Activated CD4-positive, alpha-beta T cell treated with anti-CD3 and anti-CD28 coated beads for 36 hours (primary cell): ENCODE measurements at regions of chr12 and their contacts with region 1.

Region 1: DNA sequence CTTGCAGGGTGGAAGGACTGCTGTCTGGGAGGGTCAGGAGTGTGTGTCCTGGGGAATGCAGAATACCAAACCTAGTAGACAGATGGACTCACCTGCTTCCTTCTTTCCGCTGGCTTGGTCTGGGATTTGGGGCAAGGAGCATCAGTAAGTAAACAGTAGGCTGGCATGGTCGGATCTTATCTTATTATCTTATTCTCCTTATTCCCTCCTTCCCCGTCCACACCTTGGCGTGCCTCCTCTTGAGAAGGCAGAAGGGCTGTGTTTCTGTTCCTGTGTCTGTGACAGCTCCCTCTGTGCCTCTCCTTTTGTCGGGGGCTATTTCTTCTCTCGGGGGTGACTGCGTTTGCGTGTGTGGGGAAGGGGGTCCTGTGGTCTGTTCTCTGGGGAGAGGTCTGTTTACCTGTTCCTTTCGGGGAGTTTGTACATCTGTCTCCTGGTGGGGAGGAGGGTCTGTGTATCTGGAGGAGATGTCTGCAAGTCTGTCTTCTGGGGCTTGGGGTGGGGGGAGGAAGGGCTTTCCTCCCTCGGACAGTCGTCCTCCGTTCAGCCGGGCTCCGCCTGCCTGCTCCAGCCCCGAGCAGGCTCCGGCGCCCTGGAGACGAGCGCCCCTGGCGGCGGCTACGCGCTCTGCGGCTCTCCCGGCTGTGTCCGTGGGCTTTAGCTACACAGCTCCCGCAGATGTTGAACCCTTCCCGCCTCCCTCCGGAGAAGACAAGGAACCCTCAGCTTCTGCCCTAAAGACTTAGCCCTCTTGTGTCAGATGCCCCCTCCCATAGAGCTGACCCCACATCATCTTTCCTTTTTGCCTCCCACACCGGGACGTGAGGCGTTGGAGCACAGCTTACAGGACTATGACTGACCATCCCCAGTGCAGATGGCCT is 4.3 kb downstream of the KRT86 start:
- DNase-seq: peak; percentile 85
- ATAC-seq: peak; percentile 99
- H3K4me3 Mint-ChIP-seq: no peak overlapping the region
- H3K27ac Mint-ChIP-seq: no peak overlapping the region
- H3K4me1 Mint-ChIP-seq: peaks cover 3% of the 10 kb centered on the region
- H3K27me3 Mint-ChIP-seq: peaks cover 48% of the 10 kb centered on the region

Region 2: DNA sequence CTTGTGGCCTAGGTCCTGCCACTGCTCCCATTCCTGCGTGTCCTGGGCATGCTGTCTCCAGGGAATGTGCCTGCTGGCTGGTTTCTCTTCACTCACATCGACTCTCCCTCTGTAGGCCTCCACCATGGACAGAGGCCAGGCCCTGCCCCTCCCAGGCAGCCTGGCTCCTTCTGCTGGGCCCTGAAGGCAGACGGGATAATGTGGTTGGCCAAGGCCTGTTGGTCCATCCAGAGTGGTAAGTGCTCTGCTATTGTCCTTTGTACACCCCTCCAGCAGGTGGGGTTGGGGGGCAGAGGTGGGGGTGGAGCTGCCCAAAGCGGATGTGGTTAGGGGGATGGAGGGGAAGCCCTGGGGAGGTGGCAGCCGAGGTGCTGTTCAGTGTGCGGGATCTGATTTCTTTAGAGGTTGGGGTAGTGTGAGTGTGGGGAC is 237.1 kb before region 1 on chr12:
- CTCF ChIA-PET with region 1: no interaction called
- POLR2A ChIA-PET with region 1: no interaction called
- intact Hi-C with region 1: no loop called
- DNase-seq: peak; percentile 62
- ATAC-seq: peak; percentile 55
- H3K4me3 Mint-ChIP-seq: peak overlapping the region; percentile 21
- H3K27ac Mint-ChIP-seq: peak overlapping the region; percentile 58
- H3K4me1 Mint-ChIP-seq: peaks cover 45% of the 10 kb centered on the region
- H3K27me3 Mint-ChIP-seq: no peaks in the 10 kb centered on the region

Region 3: GRCh38 chr12:52139552-52140062 is 139.2 kb before region 1 on chr12:
- CTCF ChIA-PET with region 1: no interaction called
- POLR2A ChIA-PET with region 1: no interaction called
- intact Hi-C with region 1: no loop called
- DNase-seq: peak; percentile 70
- ATAC-seq: peak; percentile 96
- H3K4me3 Mint-ChIP-seq: no peak overlapping the region
- H3K27ac Mint-ChIP-seq: no peak overlapping the region
- H3K4me1 Mint-ChIP-seq: no peaks in the 10 kb centered on the region
- H3K27me3 Mint-ChIP-seq: peaks cover 2% of the 10 kb centered on the region

Region 4: DNA sequence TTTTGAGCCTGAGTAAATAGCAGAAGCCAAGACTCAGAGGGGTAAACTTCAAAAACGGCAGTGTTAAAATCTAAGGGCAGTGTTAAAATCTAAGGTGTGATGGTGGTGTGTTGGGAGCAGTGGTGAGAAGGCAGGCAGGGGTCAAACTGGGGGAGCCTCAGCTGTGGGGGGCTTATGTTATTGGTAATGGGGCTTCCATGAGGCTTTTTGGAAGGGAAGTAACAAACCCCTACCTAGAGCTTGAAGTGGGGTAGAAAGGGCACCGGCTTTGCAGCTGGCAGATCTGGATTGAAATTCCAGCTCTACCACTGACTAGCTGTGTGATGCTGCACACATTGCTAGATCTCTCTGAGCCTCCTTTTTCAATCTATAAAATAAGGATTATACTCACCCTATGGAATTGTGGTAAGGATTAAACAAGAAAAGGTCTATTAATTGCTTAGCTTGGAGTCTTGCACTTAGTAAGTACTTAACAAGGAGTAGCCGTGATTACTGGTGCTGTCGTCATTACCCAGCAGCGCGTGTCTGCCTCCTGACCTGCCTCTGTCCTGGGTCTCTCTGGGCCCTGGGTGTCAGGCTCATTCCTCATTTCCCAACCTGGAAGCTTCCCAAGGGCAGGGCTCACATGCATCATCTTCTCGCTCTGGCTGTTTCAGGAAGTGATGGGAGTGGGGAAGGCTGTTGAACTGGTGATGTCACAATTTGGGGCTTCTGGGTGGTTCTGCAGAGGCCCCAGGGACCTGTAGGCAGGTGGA is 68.4 kb before region 1 on chr12:
- CTCF ChIA-PET with region 1: no interaction called
- POLR2A ChIA-PET with region 1: no interaction called
- intact Hi-C with region 1: no loop called
- DNase-seq: no peak
- ATAC-seq: no peak
- H3K4me3 Mint-ChIP-seq: no peak overlapping the region
- H3K27ac Mint-ChIP-seq: no peak overlapping the region
- H3K4me1 Mint-ChIP-seq: no peaks in the 10 kb centered on the region
- H3K27me3 Mint-ChIP-seq: peaks cover 10% of the 10 kb centered on the region

Region 5: GRCh38 chr12:52221912-52222457 is 56.8 kb before region 1 on chr12:
- CTCF ChIA-PET with region 1: interaction called, 7 read pairs
- POLR2A ChIA-PET with region 1: no interaction called
- intact Hi-C with region 1: loop called in 1 of 2 experiments (anchors 1 kb)
- DNase-seq: peak; percentile 96
- ATAC-seq: peak; percentile 98
- H3K4me3 Mint-ChIP-seq: no peak overlapping the region
- H3K27ac Mint-ChIP-seq: peak overlapping the region; percentile 40
- H3K4me1 Mint-ChIP-seq: peaks cover 20% of the 10 kb centered on the region
- H3K27me3 Mint-ChIP-seq: peaks cover 29% of the 10 kb centered on the region

Region 6: GRCh38 chr12:52268212-52268611 is 10.6 kb before region 1 on chr12:
- CTCF ChIA-PET with region 1: interaction called, 29 read pairs
- POLR2A ChIA-PET with region 1: no interaction called
- intact Hi-C with region 1: no loop called
- DNase-seq: no peak
- ATAC-seq: no peak
- H3K4me3 Mint-ChIP-seq: no peak overlapping the region
- H3K27ac Mint-ChIP-seq: no peak overlapping the region
- H3K4me1 Mint-ChIP-seq: no peaks in the 10 kb centered on the region
- H3K27me3 Mint-ChIP-seq: peaks cover 24% of the 10 kb centered on the region

Region 7: GRCh38 chr12:52307836-52308805 is 29.3 kb after region 1 on chr12:
- CTCF ChIA-PET with region 1: interaction called, 10 read pairs
- POLR2A ChIA-PET with region 1: no interaction called
- intact Hi-C with region 1: no loop called
- DNase-seq: peak; percentile 76
- ATAC-seq: peak; percentile 89
- H3K4me3 Mint-ChIP-seq: peak overlapping the region; percentile 26
- H3K27ac Mint-ChIP-seq: no peak overlapping the region
- H3K4me1 Mint-ChIP-seq: peaks cover 16% of the 10 kb centered on the region
- H3K27me3 Mint-ChIP-seq: peaks cover 51% of the 10 kb centered on the region

Region 8: GRCh38 chr12:52327052-52327829 is 48.5 kb after region 1 on chr12:
- CTCF ChIA-PET with region 1: interaction called, 9 read pairs
- POLR2A ChIA-PET with region 1: no interaction called
- intact Hi-C with region 1: loop called in 1 of 2 experiments (anchors 2 kb)
- DNase-seq: peak; percentile 87
- ATAC-seq: peak; percentile 99
- H3K4me3 Mint-ChIP-seq: no peak overlapping the region
- H3K27ac Mint-ChIP-seq: no peak overlapping the region
- H3K4me1 Mint-ChIP-seq: peaks cover 14% of the 10 kb centered on the region
- H3K27me3 Mint-ChIP-seq: peaks cover 10% of the 10 kb centered on the region

Region 9: DNA sequence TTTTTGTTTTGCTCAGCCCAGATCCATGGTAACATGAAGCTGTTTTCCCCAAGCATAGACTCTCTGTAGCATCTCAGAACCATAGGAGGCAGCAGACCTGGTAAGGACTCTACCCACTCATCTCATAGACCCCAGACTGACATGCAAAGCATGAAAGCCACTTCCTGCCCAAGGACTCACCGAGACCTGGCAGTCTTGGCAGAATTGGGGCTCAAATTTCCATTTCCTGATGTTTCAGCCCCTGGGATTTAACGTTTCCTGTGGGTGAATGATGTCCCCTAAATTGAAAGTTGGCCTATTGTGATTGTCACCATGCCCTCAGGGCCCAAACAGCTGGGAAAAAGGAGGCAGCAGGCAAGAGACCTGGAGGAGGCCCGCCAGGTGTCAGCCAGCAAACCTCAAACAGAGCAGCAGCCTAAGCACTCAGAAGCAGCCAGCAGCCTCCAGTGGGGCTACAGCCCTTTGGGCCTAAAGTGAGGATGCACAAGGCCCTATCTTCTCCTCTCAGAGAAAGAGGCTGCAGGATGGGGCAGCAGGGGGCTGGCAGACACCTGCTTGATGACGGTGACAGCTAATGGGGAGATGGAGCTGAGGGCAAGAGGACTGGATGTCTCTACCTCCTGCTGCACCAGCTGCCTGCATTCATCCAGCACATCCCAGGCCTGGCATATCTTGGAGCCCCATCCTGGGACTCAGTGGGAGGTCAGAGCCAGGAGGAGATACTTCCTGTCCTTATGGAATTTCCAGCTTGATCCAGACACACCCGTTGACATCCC is 80.0 kb after region 1 on chr12:
- CTCF ChIA-PET with region 1: no interaction called
- POLR2A ChIA-PET with region 1: no interaction called
- intact Hi-C with region 1: no loop called
- DNase-seq: peak; percentile 38
- ATAC-seq: peak; percentile 93
- H3K4me3 Mint-ChIP-seq: no peak overlapping the region
- H3K27ac Mint-ChIP-seq: peak overlapping the region; percentile 1
- H3K4me1 Mint-ChIP-seq: peaks cover 17% of the 10 kb centered on the region
- H3K27me3 Mint-ChIP-seq: no peaks in the 10 kb centered on the region